ENCODE measurements at regions of chr9 and their contacts with region 1.

Region 1: DNA sequence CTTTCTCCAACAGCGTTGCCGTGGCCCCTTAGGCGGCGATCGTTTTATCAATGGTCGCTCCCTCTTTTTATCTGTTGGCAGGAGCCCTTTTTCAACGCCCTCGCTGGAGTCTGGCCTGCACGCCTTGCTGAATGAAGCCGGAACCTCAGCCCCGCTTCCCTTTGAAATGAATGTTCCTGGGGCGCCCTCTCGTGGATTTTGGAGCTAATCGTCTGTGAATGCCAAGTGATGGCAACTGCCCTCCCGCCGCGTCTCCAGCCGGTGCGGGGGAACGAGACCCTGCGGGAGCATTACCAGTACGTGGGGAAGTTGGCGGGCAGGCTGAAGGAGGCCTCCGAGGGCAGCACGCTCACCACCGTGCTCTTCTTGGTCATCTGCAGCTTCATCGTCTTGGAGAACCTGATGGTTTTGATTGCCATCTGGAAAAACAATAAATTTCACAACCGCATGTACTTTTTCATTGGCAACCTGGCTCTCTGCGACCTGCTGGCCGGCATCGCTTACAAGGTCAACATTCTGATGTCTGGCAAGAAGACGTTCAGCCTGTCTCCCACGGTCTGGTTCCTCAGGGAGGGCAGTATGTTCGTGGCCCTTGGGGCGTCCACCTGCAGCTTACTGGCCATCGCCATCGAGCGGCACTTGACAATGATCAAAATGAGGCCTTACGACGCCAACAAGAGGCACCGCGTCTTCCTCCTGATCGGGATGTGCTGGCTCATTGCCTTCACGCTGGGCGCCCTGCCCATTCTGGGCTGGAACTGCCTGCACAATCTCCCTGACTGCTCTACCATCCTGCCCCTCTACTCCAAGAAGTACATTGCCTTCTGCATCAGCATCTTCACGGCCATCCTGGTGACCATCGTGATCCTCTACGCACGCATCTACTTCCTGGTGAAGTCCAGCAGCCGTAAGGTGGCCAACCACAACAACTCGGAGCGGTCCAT is 10.0 kb downstream of the S1PR3 start:
- DNase-seq: peak; percentile 97
- H3K4me3 ChIP-seq: peak overlapping the region; percentile 8 to 35 (median 15)
- H3K27ac ChIP-seq: peak overlapping the region; percentile 97 to 100 (median 99)
- H3K4me1 ChIP-seq: peaks cover 41 to 99% (median 95%) of the 10 kb centered on the region in 4 donors
- H3K27me3 ChIP-seq: no peaks in the 10 kb centered on the region
- CTCF ChIP-seq: peak; percentile 72 to 82 (median 81)
- EP300 ChIP-seq: no peak
- POLR2A ChIP-seq: no peak

Region 2: GRCh38 chr9:88593537-88594185 is 407.6 kb before region 1 on chr9:
- intact Hi-C with region 1: loop called (anchors 2 kb)
- DNase-seq: no peak
- H3K4me3 ChIP-seq: no peak overlapping the region
- H3K27ac ChIP-seq: peak overlapping the region in 1 of 4 donors; percentile 44
- H3K4me1 ChIP-seq: peaks cover 0 to 10% (median 6%) of the 10 kb centered on the region in 4 donors
- H3K27me3 ChIP-seq: no peaks in the 10 kb centered on the region
- CTCF ChIP-seq: peak; percentile 69 to 85 (median 71)
- EP300 ChIP-seq: no peak
- POLR2A ChIP-seq: no peak

Region 3: GRCh38 chr9:88722753-88723152 is 278.5 kb before region 1 on chr9:
- intact Hi-C with region 1: loop called (anchors 5 kb)
- DNase-seq: no peak
- H3K4me3 ChIP-seq: no peak overlapping the region
- H3K27ac ChIP-seq: no peak overlapping the region
- H3K4me1 ChIP-seq: peaks cover 0 to 7% (median 0%) of the 10 kb centered on the region in 4 donors
- H3K27me3 ChIP-seq: no peaks in the 10 kb centered on the region
- CTCF ChIP-seq: peak; percentile 23 to 41 (median 36)
- EP300 ChIP-seq: no peak
- POLR2A ChIP-seq: no peak

Region 4: DNA sequence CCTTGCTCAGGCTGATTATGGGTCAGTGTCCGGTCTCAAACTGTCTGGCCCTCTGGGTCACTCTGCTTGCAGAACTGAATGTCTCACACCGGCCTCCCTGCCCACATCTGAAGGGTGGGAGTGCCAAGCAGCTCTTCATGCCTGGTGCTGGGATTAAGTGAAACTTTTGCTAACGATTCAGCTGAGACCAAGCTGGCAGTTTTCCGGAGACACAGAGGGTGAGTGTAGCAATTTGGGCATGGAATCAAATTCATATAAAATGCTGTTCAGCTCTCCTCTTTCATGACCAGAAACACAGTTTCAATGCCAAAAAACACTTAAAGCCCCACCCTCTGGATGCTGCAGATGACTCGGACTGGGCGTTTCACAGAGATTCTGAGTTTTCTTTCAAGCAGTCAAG is 258.8 kb before region 1 on chr9:
- intact Hi-C with region 1: loop called (anchors 2 kb)
- DNase-seq: peak; percentile 92
- H3K4me3 ChIP-seq: peak overlapping the region in 1 of 4 donors; percentile 15
- H3K27ac ChIP-seq: peak overlapping the region; percentile 48 to 61 (median 56)
- H3K4me1 ChIP-seq: peaks cover 20 to 56% (median 46%) of the 10 kb centered on the region in 4 donors
- H3K27me3 ChIP-seq: no peaks in the 10 kb centered on the region
- CTCF ChIP-seq: no peak
- EP300 ChIP-seq: no peak
- POLR2A ChIP-seq: no peak

Region 5: DNA sequence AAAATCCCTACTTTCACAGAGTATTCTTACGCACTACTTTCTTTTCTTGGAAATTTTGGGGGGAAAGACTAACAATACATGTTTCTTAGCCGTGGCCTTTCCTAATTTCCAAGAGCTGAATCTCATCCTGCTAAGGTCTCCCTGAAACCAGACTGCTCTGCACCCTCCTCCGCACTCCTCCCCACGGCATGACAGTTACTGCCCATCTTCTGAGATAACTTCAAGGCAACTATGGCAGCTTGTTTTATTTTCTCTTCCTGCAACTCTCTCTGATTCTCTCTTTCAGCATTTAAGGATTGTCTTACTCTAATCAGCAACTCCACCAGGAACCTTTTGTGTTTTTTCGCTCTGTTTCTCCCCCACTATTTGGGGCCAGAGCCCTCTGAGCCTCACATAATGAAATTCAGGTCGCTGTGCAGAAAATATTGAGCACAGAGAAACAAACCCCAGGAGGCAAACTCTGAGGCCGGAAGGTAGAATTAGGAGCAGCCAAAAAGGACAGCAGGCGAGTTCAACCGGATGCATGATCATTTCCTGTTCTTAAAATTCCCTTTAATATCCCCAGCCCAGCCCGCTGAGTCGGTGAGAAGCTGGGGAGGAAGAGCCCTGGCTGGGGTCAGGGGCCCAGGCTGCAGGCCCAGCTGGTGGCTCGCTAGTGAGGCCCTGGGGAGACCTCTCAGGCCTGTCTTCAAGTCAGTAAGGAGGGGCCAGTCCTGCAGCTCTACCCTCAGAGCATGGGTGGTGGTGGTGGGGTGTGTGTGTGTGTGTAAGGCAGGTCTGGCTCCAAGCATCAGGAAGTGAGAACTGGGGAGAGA is 223.5 kb before region 1 on chr9:
- intact Hi-C with region 1: loop called (anchors 5 kb)
- DNase-seq: peak; percentile 90
- H3K4me3 ChIP-seq: no peak overlapping the region
- H3K27ac ChIP-seq: peak overlapping the region in 3 of 4 donors; percentile 20 to 36 (median 22)
- H3K4me1 ChIP-seq: peaks cover 40 to 59% (median 52%) of the 10 kb centered on the region in 4 donors
- H3K27me3 ChIP-seq: no peaks in the 10 kb centered on the region
- CTCF ChIP-seq: no peak
- EP300 ChIP-seq: no peak
- POLR2A ChIP-seq: no peak

Region 6: GRCh38 chr9:88936668-88937067 is 64.6 kb before region 1 on chr9:
- intact Hi-C with region 1: no loop called
- DNase-seq: peak; percentile 93
- H3K4me3 ChIP-seq: no peak overlapping the region
- H3K27ac ChIP-seq: peak overlapping the region in 3 of 4 donors; percentile 10 to 35 (median 20)
- H3K4me1 ChIP-seq: peaks cover 0 to 24% (median 17%) of the 10 kb centered on the region in 4 donors
- H3K27me3 ChIP-seq: no peaks in the 10 kb centered on the region
- CTCF ChIP-seq: no peak
- EP300 ChIP-seq: no peak
- POLR2A ChIP-seq: no peak

Region 7: GRCh38 chr9:89278997-89279739 is 277.9 kb after region 1 on chr9:
- intact Hi-C with region 1: loop called (anchors 10 kb)
- DNase-seq: no peak
- H3K4me3 ChIP-seq: no peak overlapping the region
- H3K27ac ChIP-seq: no peak overlapping the region
- H3K4me1 ChIP-seq: peaks cover 0 to 12% (median 5%) of the 10 kb centered on the region in 4 donors
- H3K27me3 ChIP-seq: no peaks in the 10 kb centered on the region
- CTCF ChIP-seq: peak; percentile 70 to 80 (median 77)
- EP300 ChIP-seq: no peak
- POLR2A ChIP-seq: no peak

Measured in esophagus muscularis mucosa (tissue), 4 donors.